ENCODE measurements at regions of chr9 and their contacts with region 1.

Region 1: GRCh38 chr9:131366761-131367401 is 27.0 kb upstream of the PRRC2B start:
- DNase-seq: no peak
- ATAC-seq: no peak
- H3K4me3 Mint-ChIP-seq: no peak overlapping the region
- H3K27ac Mint-ChIP-seq: peak overlapping the region in 7 of 10 donors; percentile 24 to 70 (median 37)
- H3K4me1 Mint-ChIP-seq: peaks cover 7 to 47% (median 10%) of the 10 kb centered on the region in 4 donors
- H3K27me3 Mint-ChIP-seq: no peaks in the 10 kb centered on the region

Region 2: DNA sequence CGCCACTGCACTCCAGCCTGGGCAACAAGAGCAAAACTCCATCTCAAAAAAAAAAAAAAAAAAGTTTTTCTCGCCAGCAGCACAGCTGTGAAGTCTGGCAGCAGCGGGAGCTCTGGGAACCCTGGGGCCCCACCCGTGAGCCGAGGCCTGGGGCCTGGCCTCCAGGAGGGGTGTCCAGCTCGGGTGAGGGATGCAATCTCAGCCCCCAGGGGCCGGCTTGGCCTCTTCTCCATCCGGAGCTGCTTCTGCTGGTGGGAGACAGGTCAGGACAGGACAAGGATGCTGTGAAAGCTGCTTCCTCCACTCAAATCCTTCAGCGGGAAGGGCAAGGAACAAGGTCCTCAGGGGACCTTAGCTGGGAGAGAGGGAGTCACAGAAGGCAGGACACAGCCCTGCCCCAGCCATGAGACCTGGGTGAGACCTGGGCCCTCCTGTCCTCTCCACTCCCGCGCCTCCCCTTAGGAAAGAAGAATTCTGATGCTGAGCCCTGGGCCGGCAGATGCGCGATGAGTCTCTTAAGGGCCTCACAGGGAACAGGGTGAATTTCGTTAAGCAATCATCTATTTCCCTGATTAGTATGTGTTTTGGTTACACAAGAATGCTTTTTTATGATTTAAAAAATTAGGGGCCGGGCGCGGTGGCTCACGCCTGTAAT is 46.7 kb before region 1 on chr9:
- POLR2A ChIA-PET with region 1: no interaction called
- DNase-seq: no peak
- ATAC-seq: no peak
- H3K4me3 Mint-ChIP-seq: no peak overlapping the region
- H3K27ac Mint-ChIP-seq: no peak overlapping the region
- H3K4me1 Mint-ChIP-seq: no peaks in the 10 kb centered on the region
- H3K27me3 Mint-ChIP-seq: peaks cover 0 to 1% (median 0%) of the 10 kb centered on the region in 5 donors

Region 3: DNA sequence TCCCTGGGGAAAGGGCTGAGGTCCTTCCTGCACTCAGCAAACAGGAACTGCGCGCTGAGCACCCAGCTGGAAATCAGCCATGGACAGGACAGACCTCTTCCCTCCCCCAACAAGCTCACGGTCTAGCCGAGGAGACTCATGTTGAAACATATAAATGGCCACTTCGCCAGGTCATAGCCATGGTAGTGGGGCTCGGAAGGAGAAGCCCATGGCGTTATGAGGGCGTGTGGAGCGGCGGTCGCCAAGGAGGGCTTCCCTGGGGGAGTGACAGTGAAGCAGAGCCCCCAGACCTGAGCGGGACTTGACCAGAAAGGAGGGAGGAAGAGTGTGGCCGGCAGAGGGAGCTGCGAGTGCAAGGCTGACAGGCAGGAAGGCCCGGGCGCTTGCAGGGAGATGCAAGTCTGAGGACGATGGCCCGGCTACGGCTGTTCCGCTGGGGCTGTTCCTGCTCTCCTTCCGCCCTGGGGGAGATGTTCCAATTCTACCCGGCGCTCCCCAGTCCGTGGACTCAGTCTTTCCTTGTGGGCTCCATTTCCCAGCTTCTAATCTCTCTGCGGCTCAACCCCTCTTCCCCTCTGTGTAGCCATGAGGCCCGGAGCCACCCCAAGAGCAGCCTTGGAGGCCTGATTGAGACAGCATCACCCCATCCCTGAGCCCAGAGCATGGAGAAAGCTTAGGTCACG is 16.9 kb before region 1 on chr9:
- POLR2A ChIA-PET with region 1: interaction called, 20 read pairs
- DNase-seq: peak; percentile 75 to 94 (median 84)
- ATAC-seq: peak; percentile 98 to 99
- H3K4me3 Mint-ChIP-seq: peak overlapping the region; percentile 20 to 63 (median 48)
- H3K27ac Mint-ChIP-seq: peak overlapping the region in 8 of 10 donors; percentile 24 to 81 (median 74)
- H3K4me1 Mint-ChIP-seq: peaks cover 2 to 11% (median 8%) of the 10 kb centered on the region in 4 donors
- H3K27me3 Mint-ChIP-seq: no peaks in the 10 kb centered on the region

Region 4: GRCh38 chr9:131393622-131394463 is 27.0 kb after region 1 on chr9 and contains the start of gene PRRC2B:
- POLR2A ChIA-PET with region 1: interaction called, 15 read pairs
- DNase-seq: peak; percentile 74 to 90 (median 82)
- ATAC-seq: peak; percentile 38 to 50
- H3K4me3 Mint-ChIP-seq: peak within 1 kb of the TSS; percentile 93 to 97 (median 94)
- H3K27ac Mint-ChIP-seq: peak within 1 kb of the TSS; percentile 93 to 98 (median 96)
- H3K4me1 Mint-ChIP-seq: peaks cover 27 to 47% (median 47%) of the 10 kb centered on the region in 4 donors
- H3K27me3 Mint-ChIP-seq: no peaks in the 10 kb centered on the region
- polyA plus RNA-seq, gene PRRC2B: 13.4 to 56.3 (median 27.9) TPM

Measured in naive thymus-derived CD8-positive, alpha-beta T cell (primary cell).